GM23248 (cell line): ENCODE measurements at regions of chr6 and their contacts with region 1.

Region 1: DNA sequence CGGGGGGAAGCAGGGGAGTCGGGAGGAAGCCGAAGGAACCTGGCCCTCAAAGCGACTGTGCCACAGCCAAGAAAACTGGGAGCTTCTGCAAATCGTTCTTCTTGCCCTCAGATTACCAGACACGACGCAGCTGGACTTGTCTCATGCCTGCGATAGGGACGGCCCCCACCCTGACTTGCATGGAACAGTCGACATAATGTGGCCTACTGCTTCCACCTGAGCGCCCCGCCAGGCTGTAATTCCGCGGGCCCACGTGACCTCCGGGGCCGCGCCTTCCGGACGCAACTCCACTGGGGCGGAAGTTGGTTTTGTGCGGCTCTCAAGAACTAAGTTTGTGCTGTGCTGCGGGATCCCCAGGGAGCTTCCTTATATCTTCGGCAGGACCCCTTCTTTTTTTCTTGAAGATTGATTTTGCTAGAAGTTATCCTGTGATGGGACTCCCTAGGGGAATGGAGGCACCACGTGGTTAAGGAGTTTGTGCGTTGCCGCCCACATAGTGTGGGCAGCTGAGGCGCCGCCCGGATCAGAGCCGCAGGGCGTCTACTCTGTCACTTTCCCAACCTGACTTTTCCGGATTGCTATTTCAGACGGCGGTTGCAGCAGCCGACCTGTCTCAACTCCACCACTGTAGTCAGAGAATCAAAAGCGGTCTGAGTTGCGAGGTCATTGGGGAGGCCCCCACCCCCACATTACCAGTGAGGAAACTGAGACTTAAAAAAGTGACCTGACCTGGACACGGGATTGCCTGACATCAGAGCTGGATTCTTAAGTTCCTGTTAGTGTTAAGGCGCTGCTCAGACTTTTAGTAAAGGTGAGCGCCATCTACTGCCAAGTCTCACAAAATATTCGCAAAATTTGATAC is 540 bp upstream of the CD164 start:
- DNase-seq: peak; percentile 97
- H3K4me3 ChIP-seq: peak overlapping the region; percentile 87
- H3K27ac ChIP-seq: peak overlapping the region; percentile 98
- H3K4me1 ChIP-seq: peaks cover 26% of the 10 kb centered on the region
- H3K27me3 ChIP-seq: no peaks in the 10 kb centered on the region

Region 2: DNA sequence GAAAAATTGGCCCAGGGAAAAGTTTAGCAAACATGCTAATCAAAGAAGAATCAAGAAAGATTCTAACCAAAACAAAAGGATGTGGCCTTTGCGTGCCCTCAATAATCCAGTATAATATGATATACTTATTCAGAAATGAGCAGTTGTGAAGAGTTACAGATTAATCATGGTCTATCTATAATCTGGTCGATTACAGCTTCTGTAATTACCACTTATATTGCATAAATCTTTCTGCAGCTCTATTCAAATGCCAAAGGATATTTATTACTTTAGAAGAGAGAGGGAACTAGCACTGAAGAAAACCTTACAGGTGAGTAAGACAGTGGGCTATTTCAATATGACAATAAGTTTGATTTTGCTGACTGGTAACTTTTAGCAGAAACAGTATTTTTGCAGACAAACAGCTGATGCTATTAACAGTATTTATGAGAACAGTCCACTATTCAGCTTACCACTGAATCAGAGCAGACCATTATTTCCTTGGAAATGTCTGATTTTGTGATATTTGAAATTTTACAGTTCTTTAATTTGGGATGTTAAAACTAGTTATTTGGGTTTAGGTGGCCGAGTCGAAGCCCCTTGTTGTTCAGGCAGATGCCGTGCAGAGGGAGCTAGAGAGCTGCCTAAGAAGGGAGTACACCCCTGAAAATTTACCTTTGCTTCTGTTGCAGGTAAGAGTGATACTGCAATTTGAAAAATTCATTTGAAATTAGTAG is 195.2 kb before region 1 on chr6:
- in situ Hi-C with region 1: loop called (anchors 10 kb)
- DNase-seq: peak; percentile 62
- H3K4me3 ChIP-seq: no peak overlapping the region
- H3K27ac ChIP-seq: no peak overlapping the region
- H3K4me1 ChIP-seq: no peaks in the 10 kb centered on the region; the same call in 1 of the 2 replicates
- H3K27me3 ChIP-seq: peaks cover 11% of the 10 kb centered on the region; the same call in 1 of the 2 replicates

Region 3: DNA sequence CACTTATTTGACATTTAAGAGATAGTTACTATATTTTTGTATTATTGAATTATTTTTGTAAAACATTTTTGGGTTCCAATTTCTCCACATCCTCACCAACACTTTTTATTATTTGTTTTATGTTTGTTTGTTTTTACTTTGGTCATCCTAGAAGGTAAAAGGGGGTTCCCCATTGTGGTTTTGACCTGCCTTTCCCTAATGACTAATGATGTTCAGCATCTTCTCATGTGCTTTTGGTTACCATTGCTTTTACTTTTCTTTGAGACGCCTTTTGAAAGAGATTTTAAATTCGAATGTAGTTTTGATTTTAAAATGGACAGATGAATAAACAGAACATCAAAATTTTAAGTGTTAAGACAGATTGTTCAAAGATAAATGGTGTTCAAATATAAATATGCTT is 261.3 kb after region 1 on chr6:
- in situ Hi-C with region 1: no loop called
- DNase-seq: no peak
- H3K4me3 ChIP-seq: no peak overlapping the region
- H3K27ac ChIP-seq: no peak overlapping the region
- H3K4me1 ChIP-seq: no peaks in the 10 kb centered on the region
- H3K27me3 ChIP-seq: no peaks in the 10 kb centered on the region